ENCODE measurements at regions of chr2 and their contacts with region 1.

Region 1: GRCh38 chr2:169824373-169825333 is at the start of gene METTL5:
- DNase-seq: peak; percentile 92
- total RNA-seq, gene METTL5: 61.5 TPM

Region 2: GRCh38 chr2:169798718-169799592 is 25.7 kb before region 1 on chr2 and contains the start of gene SSB:
- intact Hi-C with region 1: loop called (anchors 2 kb)
- DNase-seq: peak; percentile 96
- total RNA-seq, gene SSB: 61.8 TPM

Region 3: DNA sequence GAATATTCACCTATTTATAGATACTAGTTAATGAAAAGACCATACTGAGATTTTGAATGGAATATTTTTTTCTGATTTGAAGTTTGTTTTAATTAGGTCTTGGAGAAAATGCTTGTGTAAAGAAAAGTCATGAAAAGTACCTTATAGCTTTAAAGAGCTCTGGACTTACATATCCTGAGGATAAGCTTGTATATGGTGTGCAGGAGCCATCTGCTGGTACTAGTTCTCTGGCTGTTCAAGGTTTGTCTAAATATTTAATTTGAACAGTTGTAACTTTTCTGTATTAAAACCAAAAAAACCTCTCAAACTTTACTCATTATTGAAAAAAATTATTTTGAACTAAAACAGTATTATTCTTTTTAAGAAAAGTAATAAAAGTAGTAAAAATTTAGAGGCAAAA is 52.7 kb after region 1 on chr2:
- intact Hi-C with region 1: loop called (anchors 2 kb)
- DNase-seq: no peak

Region 4: DNA sequence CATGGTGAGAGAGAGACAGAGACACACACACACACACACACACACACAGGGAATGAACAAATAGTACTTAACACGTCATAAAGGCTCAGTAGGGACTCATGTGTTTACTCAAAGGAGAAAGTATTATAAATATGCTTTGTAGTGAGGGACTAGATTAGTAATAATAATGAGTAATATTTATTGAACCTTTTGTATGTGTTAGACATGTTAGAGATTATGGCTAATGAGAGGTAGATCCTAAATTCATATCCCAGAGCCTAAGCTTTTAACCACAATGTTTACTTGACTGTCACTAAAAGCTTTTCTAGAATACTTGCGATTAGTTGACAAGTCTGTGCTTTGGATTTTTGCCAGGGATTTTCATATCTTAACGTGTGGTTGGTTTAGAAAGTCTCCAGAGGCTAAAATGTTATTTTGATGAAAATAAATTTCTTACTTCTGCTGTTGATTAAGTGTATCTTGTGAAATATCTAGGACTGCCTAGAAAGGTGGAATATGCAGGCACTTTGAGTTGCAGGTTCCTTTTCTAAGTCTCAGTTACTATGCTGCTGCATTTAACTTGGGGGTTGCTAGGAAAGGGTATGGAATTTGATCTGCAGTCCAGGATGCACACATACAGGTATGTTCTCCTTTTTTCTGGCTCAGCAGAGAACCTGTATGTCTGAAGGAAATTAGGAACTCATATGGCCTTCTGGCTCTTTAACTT is 67.1 kb after region 1 on chr2:
- intact Hi-C with region 1: no loop called
- DNase-seq: no peak

Region 5: GRCh38 chr2:169928463-169928864 is 103.8 kb after region 1 on chr2:
- intact Hi-C with region 1: loop called (anchors 2 kb)
- DNase-seq: no peak